ENCODE measurements at regions of chr6 and their contacts with region 1.

Region 1: DNA sequence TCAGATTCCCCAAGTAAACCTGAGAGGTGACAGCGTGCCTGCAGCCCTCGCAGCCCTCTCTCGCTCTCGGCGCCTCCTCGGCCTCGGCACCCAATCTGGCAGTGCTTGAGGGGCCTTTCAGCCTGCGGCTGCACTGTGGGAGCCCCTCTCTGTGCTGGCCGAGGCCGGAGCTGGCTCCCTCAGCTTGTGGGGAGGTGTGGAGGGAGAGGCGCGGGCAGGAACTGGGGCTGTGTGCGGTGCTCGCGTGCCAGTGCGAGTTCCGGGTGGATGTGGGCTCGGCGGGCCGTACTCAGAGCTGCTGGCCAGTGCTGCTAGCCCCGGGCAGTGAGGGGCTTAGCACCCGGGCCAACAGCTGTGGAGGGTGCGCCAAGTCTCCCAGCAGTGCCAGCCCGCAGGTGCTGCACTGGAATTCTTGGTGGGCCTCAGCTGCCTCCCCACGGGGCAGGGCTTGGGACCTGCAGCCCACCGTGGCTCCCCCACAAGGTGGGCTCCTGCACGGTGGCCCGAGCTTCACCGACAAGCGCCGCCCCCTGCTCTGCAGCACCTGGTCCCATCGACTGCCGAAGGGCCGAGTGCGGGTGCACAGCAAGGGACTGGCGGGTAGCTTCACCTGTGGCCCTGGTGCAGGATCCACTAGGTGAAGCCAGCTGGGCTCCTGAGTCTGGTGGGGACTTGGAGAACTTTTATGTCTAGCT is 809.7 kb upstream of the ADGRB3 start:
- DNase-seq: no peak
- H3K4me3 ChIP-seq: no peak overlapping the region
- CTCF ChIP-seq: no peak

Region 2: DNA sequence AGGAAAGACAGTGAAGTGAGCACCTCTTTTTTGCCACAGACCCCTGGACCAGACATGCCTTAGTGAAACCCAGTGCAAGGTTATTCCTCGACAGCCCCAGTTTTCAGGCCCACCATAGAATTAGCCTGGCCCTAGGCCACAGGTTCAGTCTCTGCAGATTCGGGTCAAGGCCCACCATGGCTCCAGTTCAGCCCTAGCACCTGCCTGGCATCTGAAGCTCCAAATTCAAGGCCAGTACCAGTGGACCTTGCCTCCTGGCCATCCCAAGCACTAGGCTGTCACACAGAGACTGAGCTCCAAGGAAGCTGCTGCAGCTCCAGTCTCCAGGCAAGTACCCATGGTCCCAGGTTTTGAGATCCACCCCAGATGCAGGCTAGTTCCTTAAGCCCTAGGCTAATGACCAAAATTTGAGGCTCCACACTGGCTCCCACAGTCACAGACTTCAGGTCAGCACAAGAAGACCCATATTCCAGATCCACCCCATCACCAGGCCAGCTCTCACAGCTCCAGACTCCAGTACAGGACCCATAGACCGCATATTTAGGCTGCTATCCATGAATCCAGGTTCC is 67.8 kb before region 1 on chr6:
- in situ Hi-C with region 1: loop called (anchors 5 kb)
- DNase-seq: no peak
- H3K4me3 ChIP-seq: no peak overlapping the region
- CTCF ChIP-seq: no peak

Measured in astrocyte of the cerebellum (primary cell).